ENCODE measurements at regions of chr15 and their contacts with region 1.

Region 1: DNA sequence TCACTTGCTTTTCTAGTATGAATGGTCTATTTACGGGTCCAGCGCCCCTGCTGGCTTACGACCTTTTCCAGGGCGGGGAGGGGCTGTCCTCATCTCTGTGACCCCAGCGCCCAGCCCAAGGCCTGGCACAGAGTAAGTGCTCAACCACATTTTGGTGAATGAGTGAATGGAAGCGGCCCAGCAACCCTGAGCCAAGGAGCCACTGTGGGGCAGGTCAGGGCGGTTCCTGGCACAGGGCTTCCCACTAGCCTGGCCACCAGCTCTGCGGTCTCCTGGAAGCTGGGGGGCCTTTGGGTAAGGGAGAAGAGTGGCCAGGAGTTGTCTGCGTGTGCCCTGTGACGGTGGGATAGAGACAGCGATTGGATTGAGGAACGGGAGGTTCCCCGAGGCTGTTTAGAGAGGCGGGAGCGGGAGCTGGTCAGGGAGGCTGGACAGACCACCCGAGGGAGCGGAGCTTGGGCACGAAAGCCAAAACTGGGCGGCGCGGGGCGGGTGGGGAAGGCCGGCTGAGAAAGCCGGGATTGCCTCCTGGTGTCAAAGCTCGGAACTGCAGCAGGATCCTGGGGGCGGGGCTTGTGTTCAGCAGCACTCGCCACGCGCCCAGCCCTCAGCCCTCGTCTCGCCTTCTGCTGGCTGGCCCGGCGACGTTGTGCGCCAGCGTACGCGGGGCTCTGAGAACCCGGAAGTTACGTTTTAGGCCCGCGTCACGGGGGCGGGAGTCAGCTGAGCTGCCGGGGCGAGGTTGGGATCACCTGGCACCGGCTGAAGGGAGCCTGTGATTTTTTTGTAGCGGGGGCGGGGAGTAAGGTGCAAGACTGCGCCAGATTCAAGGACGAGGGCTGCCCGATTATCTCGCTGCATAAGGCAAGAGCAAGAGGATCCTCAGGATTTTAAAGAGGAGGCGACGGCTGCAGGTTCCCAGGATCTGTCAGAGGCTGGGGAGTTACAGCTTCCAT is at the start of gene VPS18:
- DNase-seq: peak; percentile 97
- H3K4me3 ChIP-seq: peak within 1 kb of the TSS; percentile 79 to 90 (median 88)
- H3K27ac ChIP-seq: peak within 1 kb of the TSS; percentile 91
- H3K4me1 ChIP-seq: peaks cover 18% of the 10 kb centered on the region
- H3K27me3 ChIP-seq: no peaks in the 10 kb centered on the region
- CTCF ChIP-seq: peak; percentile 78 to 88
- total RNA-seq, gene VPS18: 21.5 to 56.0 TPM

Region 2: DNA sequence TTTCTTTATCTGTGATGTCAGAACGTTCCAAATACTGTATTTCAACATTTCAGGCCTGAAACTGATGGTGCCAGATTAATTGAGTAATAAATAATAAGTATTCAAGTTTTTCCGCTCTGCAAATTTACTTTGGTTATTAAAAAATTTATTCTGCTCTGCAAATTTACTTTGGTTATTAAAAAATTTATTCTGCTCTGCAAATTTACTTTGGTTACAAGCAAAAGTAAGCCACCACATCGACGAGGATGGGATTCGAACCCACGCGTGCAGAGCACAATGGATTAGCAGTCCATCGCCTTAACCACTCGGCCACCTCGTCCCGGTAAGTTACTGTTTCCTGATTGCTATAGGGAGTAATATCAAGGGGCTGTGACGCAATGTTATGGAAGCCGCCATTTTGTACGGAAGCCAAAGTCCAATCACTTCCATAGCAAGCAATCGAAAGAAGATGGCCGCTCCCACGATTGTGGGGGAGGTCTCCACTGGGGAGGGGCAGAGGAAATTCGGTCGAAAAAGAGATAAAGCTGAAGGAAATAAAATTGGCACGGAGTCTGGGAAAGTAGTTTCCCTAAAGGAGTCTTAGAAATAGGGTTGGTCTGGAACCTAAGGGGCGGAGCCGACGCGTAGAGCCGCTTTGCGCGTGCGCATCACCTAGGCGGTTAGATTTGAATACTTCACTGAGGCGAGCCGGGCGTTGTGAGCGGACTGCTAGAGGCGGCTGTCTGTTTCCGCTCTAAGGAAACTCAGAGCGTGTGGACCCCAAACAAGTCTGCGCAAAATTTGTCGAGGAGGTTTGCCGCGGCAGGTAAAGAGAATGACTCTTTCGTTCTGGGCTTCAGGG is 300.2 kb before region 1 on chr15 and contains the start of gene KNL1:
- CTCF ChIA-PET with region 1: interaction called, 14 read pairs
- dilution Hi-C with region 1: loop called (anchors 10 kb)
- in situ Hi-C with region 1: no loop called
- intact Hi-C with region 1: loop called (anchors 2 kb)
- DNase-seq: peak; percentile 93
- H3K4me3 ChIP-seq: peak within 1 kb of the TSS; percentile 70 to 80 (median 76)
- H3K27ac ChIP-seq: peak within 1 kb of the TSS; percentile 88
- H3K4me1 ChIP-seq: peaks cover 11% of the 10 kb centered on the region
- H3K27me3 ChIP-seq: no peaks in the 10 kb centered on the region
- CTCF ChIP-seq: no peak
- total RNA-seq, gene KNL1: 1.8 to 21.3 TPM

Region 3: GRCh38 chr15:40743921-40744814 is 149.8 kb before region 1 on chr15:
- CTCF ChIA-PET with region 1: interaction called, 10 read pairs
- dilution Hi-C with region 1: no loop called
- in situ Hi-C with region 1: no loop called
- intact Hi-C with region 1: loop called (anchors 1 kb)
- DNase-seq: peak; percentile 78
- H3K4me3 ChIP-seq: no peak overlapping the region
- H3K27ac ChIP-seq: no peak overlapping the region
- H3K4me1 ChIP-seq: peaks cover 10% of the 10 kb centered on the region
- H3K27me3 ChIP-seq: no peaks in the 10 kb centered on the region
- CTCF ChIP-seq: no peak

Region 4: GRCh38 chr15:40782580-40783227 is 111.3 kb before region 1 on chr15:
- CTCF ChIA-PET with region 1: interaction called, 3 read pairs
- dilution Hi-C with region 1: no loop called
- in situ Hi-C with region 1: no loop called
- intact Hi-C with region 1: loop called (anchors 1 kb)
- DNase-seq: peak; percentile 67
- H3K4me3 ChIP-seq: no peak overlapping the region
- H3K27ac ChIP-seq: no peak overlapping the region
- H3K4me1 ChIP-seq: peaks cover 25% of the 10 kb centered on the region
- H3K27me3 ChIP-seq: no peaks in the 10 kb centered on the region
- CTCF ChIP-seq: peak; percentile 83 to 93

Region 5: DNA sequence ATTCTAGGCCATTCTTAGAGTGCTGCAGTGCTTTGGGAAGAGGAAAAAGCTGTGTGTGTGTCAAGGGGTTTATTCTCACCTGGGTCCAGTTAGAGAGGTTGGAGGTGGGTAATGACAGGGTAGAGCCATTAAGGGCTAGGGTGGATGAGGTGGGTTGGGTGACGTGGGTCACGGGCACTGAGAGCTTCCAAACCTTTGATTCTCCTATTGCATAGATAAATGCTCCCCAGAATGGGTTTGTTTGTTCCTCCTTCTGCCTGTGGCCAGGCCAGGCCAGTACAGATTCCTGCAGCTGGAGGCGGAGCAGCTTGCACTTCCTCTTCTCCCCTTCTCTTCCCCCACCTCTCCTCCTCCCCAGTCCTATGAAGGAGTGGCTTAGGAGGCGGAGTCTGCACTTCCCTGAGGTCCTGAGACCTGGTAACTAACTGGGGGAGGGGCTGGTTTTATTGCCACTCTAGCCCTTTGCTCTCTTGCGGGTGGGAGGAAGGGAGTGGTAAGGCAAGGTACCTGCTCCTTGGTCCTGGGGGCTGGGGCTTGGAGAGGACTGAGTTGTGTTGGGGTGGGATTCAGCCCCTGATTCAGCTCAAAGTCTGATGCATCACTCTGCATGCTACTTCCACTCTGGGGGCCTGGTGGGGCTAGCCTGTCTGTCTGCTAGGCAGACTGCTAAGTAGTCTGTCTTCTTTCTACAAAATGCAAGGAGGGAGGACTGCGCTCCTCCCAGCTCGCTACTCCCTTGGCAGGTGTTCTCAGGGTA is 46.6 kb before region 1 on chr15:
- CTCF ChIA-PET with region 1: no interaction called
- dilution Hi-C with region 1: no loop called
- in situ Hi-C with region 1: loop called in 1 of 2 experiments (anchors 5 kb)
- intact Hi-C with region 1: loop called (anchors 1 kb)
- DNase-seq: peak; percentile 65
- H3K4me3 ChIP-seq: peak overlapping the region in 2 of 3 experiments; percentile 5 to 94
- H3K27ac ChIP-seq: peak overlapping the region; percentile 85
- H3K4me1 ChIP-seq: peaks cover 34% of the 10 kb centered on the region
- H3K27me3 ChIP-seq: no peaks in the 10 kb centered on the region
- CTCF ChIP-seq: no peak

Region 6: DNA sequence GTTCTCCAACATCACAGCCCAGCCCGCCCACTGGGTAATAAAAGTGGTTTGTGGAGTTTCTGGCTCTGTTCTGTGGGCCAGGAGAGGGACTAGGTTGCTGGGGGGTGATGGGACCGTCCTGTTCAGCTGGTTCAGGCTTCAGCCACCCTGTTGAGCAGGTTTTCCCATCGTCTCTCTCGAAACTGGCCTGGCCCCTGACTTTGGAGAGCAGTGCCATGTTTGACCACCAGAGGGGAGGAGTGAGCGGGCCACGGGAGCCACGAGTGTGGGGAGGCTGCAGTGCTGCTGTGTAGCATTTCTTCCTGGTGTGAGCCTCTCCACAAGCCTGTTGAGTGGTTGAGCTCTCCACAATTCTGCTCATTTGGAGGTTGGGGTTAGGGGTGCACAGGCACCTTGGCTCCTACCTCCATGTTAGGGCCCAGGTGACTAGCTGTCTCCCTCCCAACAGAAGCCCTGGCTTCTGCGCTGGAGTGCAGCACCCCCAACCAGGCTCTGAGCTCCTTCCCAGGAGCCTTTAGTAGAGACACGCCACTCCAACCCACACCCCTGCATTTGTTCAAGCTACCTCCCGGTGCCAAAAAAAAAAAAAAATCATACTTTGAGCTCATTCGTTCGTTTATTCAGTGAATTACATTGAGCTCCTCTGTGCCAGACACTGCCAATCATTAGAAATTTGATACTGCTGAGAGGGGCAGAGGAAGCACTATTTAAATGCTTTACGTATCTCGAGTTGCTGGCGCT is 36.2 kb before region 1 on chr15:
- CTCF ChIA-PET with region 1: interaction called, 29 read pairs
- dilution Hi-C with region 1: no loop called
- in situ Hi-C with region 1: loop called (anchors 5 kb)
- intact Hi-C with region 1: loop called (anchors 1 kb)
- DNase-seq: peak; percentile 79
- H3K4me3 ChIP-seq: no peak overlapping the region
- H3K27ac ChIP-seq: peak overlapping the region; percentile 40
- H3K4me1 ChIP-seq: no peaks in the 10 kb centered on the region
- H3K27me3 ChIP-seq: no peaks in the 10 kb centered on the region
- CTCF ChIP-seq: peak; percentile 98 to 99

Region 7: GRCh38 chr15:40906091-40906990 is 12.3 kb after region 1 on chr15:
- CTCF ChIA-PET with region 1: interaction called, 8 read pairs
- dilution Hi-C with region 1: no loop called
- in situ Hi-C with region 1: no loop called
- intact Hi-C with region 1: loop called (anchors 1 kb)
- DNase-seq: peak; percentile 74
- H3K4me3 ChIP-seq: peak overlapping the region in 1 of 3 experiments; percentile 31
- H3K27ac ChIP-seq: no peak overlapping the region
- H3K4me1 ChIP-seq: peaks cover 38% of the 10 kb centered on the region
- H3K27me3 ChIP-seq: no peaks in the 10 kb centered on the region
- CTCF ChIP-seq: peak; percentile 34 to 68

Region 8: DNA sequence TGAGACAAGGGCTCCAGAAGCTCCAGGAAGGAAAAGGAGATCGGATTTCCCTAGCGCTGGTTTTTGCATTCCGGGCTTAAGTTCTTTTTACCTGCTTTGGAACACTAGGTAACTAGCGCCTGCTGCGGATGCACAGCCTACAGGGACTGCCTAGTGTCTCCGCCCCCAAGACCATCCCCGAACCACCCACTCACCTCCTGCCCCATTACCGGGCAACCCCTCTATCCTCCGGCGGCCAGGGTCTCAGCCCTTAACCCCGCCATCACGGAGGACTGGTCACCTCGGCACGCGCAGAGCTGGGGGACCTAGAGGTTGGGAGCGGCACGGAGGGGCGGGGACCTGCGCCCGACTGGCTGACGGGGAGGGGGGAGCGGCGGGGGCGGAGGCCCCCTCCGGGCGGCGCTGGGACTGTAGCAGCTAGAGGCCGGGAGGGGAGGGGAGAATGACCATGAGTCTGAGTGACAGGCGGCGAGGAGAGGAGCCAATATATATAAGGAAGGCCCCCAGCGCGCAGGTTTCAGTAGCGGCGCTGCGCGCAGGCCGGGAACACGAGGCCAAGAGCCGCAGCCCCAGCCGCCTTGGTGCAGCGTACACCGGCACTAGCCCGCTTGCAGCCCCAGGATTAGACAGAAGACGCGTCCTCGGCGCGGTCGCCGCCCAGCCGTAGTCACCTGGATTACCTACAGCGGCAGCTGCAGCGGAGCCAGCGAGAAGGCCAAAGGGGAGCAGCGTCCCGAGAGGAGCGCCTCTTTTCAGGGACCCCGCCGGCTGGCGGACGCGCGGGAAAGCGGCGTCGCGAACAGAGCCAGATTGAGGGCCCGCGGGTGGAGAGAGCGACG is 35.0 kb after region 1 on chr15 and contains the start of gene DLL4:
- CTCF ChIA-PET with region 1: no interaction called
- dilution Hi-C with region 1: no loop called
- in situ Hi-C with region 1: no loop called
- intact Hi-C with region 1: no loop called
- DNase-seq: peak; percentile 62
- H3K4me3 ChIP-seq: peak within 1 kb of the TSS; percentile 40 to 44 (median 42)
- H3K27ac ChIP-seq: no peak within 1 kb of the TSS
- H3K4me1 ChIP-seq: peaks cover 35% of the 10 kb centered on the region
- H3K27me3 ChIP-seq: peaks cover 30% of the 10 kb centered on the region
- CTCF ChIP-seq: no peak
- total RNA-seq, gene DLL4: under 0.01 TPM in 1 of 2 donors, not detected in the other

Measured in mammary epithelial cell (primary cell).